ENCODE measurements at regions of chr22 and their contacts with region 1.

Region 1: DNA sequence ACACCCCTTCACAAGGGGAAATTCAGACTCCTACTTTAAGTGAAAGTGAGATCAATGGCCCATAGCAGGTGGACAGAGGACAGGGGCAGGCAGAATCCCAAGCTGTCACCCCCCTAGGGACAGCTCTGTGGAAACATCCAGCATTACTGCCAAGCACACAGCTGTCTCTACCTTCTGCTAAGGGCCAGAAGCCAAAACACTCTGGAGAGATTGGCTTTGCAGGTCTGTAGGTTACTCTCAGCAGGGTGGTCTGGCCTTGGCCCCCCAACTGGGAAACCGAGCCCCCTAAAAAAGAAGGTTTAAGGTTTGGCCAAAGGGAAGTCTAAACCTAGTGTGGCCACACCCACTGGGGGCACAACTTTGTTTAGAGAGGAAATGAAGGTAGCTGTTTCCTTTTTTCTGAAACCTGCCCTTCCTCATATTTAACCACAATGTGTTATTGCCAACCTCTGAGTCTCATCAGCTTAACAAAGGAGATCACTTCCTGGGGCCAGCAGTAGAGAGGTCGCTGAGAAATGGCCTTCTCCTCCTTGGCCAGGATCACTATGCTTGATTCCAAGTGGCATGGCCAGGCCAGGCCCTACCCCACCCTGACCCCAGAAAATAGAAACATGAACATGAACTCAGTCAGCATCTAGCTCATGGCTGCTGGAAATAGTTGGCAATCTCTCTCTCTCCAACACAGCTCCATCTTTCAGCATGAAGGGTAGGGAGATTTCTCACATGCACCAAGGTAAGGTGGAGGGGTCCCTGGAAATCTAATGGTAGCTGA is 25.9 kb upstream of the SCARF2 start:
- DNase-seq: peak in 8 of 9 experiments; percentile 33 to 78 (median 60)
- ATAC-seq: peak; percentile 61
- H3K4me3 ChIP-seq: peak overlapping the region in 1 of 2 experiments; percentile 10
- H3K4me3 Mint-ChIP-seq: peak overlapping the region; percentile 74
- H3K27ac ChIP-seq: peak overlapping the region; percentile 84 to 90
- H3K27ac Mint-ChIP-seq: peak overlapping the region; percentile 98
- H3K4me1 ChIP-seq: peaks cover 57% of the 10 kb centered on the region
- H3K4me1 Mint-ChIP-seq: peaks cover 61% of the 10 kb centered on the region
- H3K27me3 ChIP-seq: no peaks in the 10 kb centered on the region
- H3K27me3 Mint-ChIP-seq: no peaks in the 10 kb centered on the region
- CTCF ChIP-seq: no peak

Region 2: GRCh38 chr22:19962233-19962908 is 501.1 kb before region 1 on chr22:
- CTCF ChIA-PET with region 1: no interaction called
- POLR2A ChIA-PET with region 1: no interaction called
- intact Hi-C with region 1: no loop called
- DNase-seq: peak in 5 of 9 experiments; percentile 59 to 76 (median 63)
- ATAC-seq: peak; percentile 97
- H3K4me3 ChIP-seq: no peak overlapping the region
- H3K4me3 Mint-ChIP-seq: no peak overlapping the region
- H3K27ac ChIP-seq: no peak overlapping the region
- H3K27ac Mint-ChIP-seq: no peak overlapping the region
- H3K4me1 ChIP-seq: no peaks in the 10 kb centered on the region
- H3K4me1 Mint-ChIP-seq: no peaks in the 10 kb centered on the region
- H3K27me3 ChIP-seq: no peaks in the 10 kb centered on the region
- H3K27me3 Mint-ChIP-seq: no peaks in the 10 kb centered on the region
- CTCF ChIP-seq: peak; percentile 32

Region 3: GRCh38 chr22:20319745-20320658 is 143.5 kb before region 1 on chr22 and contains the start of gene DGCR6L:
- CTCF ChIA-PET with region 1: no interaction called
- POLR2A ChIA-PET with region 1: interaction called, 3 read pairs
- intact Hi-C with region 1: loop called in 1 of 2 experiments (anchors 5 kb)
- DNase-seq: peak; percentile 91 to 99 (median 97)
- ATAC-seq: peak; percentile 76
- H3K4me3 ChIP-seq: peak within 1 kb of the TSS; percentile 88 to 97
- H3K4me3 Mint-ChIP-seq: peak within 1 kb of the TSS; percentile 90
- H3K27ac ChIP-seq: peak within 1 kb of the TSS; percentile 69 to 70
- H3K27ac Mint-ChIP-seq: peak within 1 kb of the TSS; percentile 89
- H3K4me1 ChIP-seq: peaks cover 51% of the 10 kb centered on the region
- H3K4me1 Mint-ChIP-seq: peaks cover 62% of the 10 kb centered on the region
- H3K27me3 ChIP-seq: no peaks in the 10 kb centered on the region
- H3K27me3 Mint-ChIP-seq: no peaks in the 10 kb centered on the region
- CTCF ChIP-seq: no peak
- total RNA-seq, gene DGCR6L: 29.8 to 32.9 TPM

Region 4: GRCh38 chr22:20405931-20406685 is 57.4 kb before region 1 on chr22:
- CTCF ChIA-PET with region 1: no interaction called
- POLR2A ChIA-PET with region 1: no interaction called
- intact Hi-C with region 1: no loop called
- DNase-seq: no peak
- ATAC-seq: no peak
- H3K4me3 ChIP-seq: no peak overlapping the region
- H3K4me3 Mint-ChIP-seq: no peak overlapping the region
- H3K27ac ChIP-seq: no peak overlapping the region
- H3K27ac Mint-ChIP-seq: no peak overlapping the region
- H3K4me1 ChIP-seq: peaks cover 7% of the 10 kb centered on the region
- H3K4me1 Mint-ChIP-seq: peaks cover 12% of the 10 kb centered on the region
- H3K27me3 ChIP-seq: no peaks in the 10 kb centered on the region
- H3K27me3 Mint-ChIP-seq: no peaks in the 10 kb centered on the region
- CTCF ChIP-seq: no peak

Region 5: GRCh38 chr22:20430720-20431510 is 32.6 kb before region 1 on chr22:
- CTCF ChIA-PET with region 1: interaction called, 4 read pairs
- POLR2A ChIA-PET with region 1: interaction called, 20 read pairs
- intact Hi-C with region 1: no loop called
- DNase-seq: peak; percentile 33 to 81 (median 62)
- ATAC-seq: peak; percentile 58
- H3K4me3 ChIP-seq: peak overlapping the region; percentile 60 to 67
- H3K4me3 Mint-ChIP-seq: peak overlapping the region; percentile 83
- H3K27ac ChIP-seq: no peak overlapping the region
- H3K27ac Mint-ChIP-seq: no peak overlapping the region
- H3K4me1 ChIP-seq: peaks cover 35% of the 10 kb centered on the region
- H3K4me1 Mint-ChIP-seq: peaks cover 35% of the 10 kb centered on the region
- H3K27me3 ChIP-seq: peaks cover 24 to 29% of the 10 kb centered on the region in 2 experiments
- H3K27me3 Mint-ChIP-seq: peaks cover 42% of the 10 kb centered on the region
- CTCF ChIP-seq: peak; percentile 18

Region 6: DNA sequence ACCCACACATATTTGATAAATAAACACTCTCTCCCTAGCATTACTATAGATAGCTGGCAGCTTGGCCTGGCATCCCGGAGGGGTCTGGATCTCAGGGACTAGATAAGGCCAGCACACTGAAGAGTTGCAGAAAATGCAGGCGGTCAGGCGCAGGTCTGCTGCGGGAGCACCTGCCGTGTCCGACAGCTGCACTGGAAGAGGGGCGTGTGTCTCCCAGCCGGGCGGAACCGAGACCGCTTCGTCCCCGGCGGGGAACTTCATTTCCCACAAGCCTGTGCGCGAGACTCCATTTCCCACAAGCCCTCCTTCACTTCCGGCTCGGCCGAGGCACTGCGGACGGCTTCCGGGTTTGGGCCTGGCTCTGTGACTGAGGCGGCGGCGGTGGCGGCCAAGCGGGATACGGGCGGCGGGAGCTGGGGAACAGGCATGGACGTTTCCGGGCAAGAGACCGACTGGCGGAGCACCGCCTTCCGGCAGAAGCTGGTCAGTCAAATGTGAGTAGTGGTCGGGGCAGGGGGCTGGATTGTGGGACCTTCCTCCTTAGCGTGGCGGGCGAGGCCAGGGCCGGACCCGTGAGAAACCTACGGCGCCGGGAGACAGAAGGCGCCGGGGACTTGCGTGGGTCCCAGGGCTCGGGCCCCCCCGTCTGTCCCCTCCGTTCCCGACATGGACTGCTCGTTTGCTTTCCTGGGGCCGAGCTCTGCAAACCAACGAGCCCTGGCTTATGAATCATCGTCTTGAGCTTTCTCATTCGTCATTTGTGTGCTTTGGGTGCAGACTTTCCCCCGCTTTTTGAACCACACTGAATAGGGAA is 44.0 kb after region 1 on chr22 and contains the start of gene MED15:
- CTCF ChIA-PET with region 1: no interaction called
- POLR2A ChIA-PET with region 1: interaction called, 14 read pairs
- intact Hi-C with region 1: loop called in 1 of 2 experiments (anchors 1 kb)
- DNase-seq: peak; percentile 71 to 93 (median 88)
- ATAC-seq: peak; percentile 81
- H3K4me3 ChIP-seq: peak within 1 kb of the TSS; percentile 92 to 100
- H3K4me3 Mint-ChIP-seq: peak within 1 kb of the TSS; percentile 95
- H3K27ac ChIP-seq: peak within 1 kb of the TSS; percentile 86 to 95
- H3K27ac Mint-ChIP-seq: peak within 1 kb of the TSS; percentile 96
- H3K4me1 ChIP-seq: peaks cover 34% of the 10 kb centered on the region
- H3K4me1 Mint-ChIP-seq: peaks cover 49% of the 10 kb centered on the region
- H3K27me3 ChIP-seq: no peaks in the 10 kb centered on the region
- H3K27me3 Mint-ChIP-seq: no peaks in the 10 kb centered on the region
- CTCF ChIP-seq: no peak
- total RNA-seq, gene MED15: 316 TPM

Region 7: DNA sequence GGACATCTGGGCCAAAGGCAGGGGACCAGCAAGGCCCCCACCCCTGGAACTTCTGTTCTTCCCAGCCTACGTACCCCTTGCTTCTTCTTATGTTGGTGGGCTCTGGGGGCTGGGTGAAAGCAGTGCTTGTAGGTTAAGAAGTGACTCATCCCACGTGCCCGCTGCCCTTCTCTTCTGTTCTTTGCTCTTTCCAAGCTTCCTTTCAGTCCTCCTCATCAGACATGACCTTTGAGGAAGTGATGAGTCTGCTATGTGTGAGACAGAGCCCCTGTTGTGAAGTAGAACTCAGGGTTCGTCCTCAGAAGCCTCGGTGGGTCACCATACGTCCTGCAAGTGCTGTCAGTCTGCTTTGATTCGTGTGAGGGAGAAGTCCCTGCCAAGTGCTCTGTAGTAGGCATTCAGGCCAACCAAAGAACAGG is 56.6 kb after region 1 on chr22:
- CTCF ChIA-PET with region 1: no interaction called
- POLR2A ChIA-PET with region 1: no interaction called
- intact Hi-C with region 1: no loop called
- DNase-seq: peak in 5 of 9 experiments; percentile 30 to 52 (median 40)
- ATAC-seq: peak; percentile 69
- H3K4me3 ChIP-seq: no peak overlapping the region
- H3K4me3 Mint-ChIP-seq: no peak overlapping the region
- H3K27ac ChIP-seq: peak overlapping the region in 1 of 2 experiments; percentile 46
- H3K27ac Mint-ChIP-seq: peak overlapping the region; percentile 78
- H3K4me1 ChIP-seq: peaks cover 62% of the 10 kb centered on the region
- H3K4me1 Mint-ChIP-seq: peaks cover 79% of the 10 kb centered on the region
- H3K27me3 ChIP-seq: no peaks in the 10 kb centered on the region
- H3K27me3 Mint-ChIP-seq: no peaks in the 10 kb centered on the region
- CTCF ChIP-seq: no peak

Region 8: DNA sequence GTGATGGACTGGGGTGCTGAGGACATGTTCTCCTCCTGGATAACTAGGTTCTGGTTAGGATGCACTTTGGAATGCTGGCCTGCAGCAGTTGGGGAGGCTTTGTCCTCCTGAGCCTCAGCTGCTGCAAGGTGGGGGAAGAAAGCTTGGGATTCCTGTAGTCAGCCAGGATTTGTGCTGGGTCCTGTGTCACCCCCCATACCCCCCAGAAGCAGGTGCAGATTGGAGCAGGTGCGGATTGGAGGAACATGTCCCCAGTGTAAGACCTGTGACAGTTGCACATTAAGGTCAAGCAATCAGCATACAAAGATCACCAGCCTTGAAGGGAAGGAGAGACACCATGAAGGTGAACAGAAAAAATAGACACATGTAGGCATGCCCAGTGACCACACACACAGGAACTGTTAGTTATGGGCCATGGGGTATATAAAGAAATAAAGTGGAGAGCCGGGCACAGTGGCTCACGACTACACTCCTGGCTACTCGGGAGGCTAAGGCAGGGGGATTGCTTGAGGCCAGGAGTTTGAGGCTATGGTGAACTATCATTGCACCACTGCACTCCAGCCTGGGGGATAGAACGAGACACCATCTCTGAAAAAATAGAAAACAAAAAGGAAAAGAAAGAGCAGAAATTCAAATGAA is 95.2 kb after region 1 on chr22:
- CTCF ChIA-PET with region 1: interaction called, 26 read pairs
- POLR2A ChIA-PET with region 1: interaction called, 30 read pairs
- intact Hi-C with region 1: no loop called
- DNase-seq: no peak
- ATAC-seq: no peak
- H3K4me3 ChIP-seq: no peak overlapping the region
- H3K4me3 Mint-ChIP-seq: peak overlapping the region; percentile 75
- H3K27ac ChIP-seq: peak overlapping the region in 1 of 2 experiments; percentile 87
- H3K27ac Mint-ChIP-seq: peak overlapping the region; percentile 97
- H3K4me1 ChIP-seq: peaks cover 65% of the 10 kb centered on the region
- H3K4me1 Mint-ChIP-seq: peaks cover 82% of the 10 kb centered on the region
- H3K27me3 ChIP-seq: no peaks in the 10 kb centered on the region
- H3K27me3 Mint-ChIP-seq: no peaks in the 10 kb centered on the region
- CTCF ChIP-seq: no peak

Region 9: GRCh38 chr22:20750461-20751184 is 287.1 kb after region 1 on chr22:
- CTCF ChIA-PET with region 1: no interaction called
- POLR2A ChIA-PET with region 1: no interaction called
- intact Hi-C with region 1: no loop called
- DNase-seq: peak in 4 of 9 experiments; percentile 17 to 51 (median 37)
- ATAC-seq: no peak
- H3K4me3 ChIP-seq: no peak overlapping the region
- H3K4me3 Mint-ChIP-seq: no peak overlapping the region
- H3K27ac ChIP-seq: no peak overlapping the region
- H3K27ac Mint-ChIP-seq: no peak overlapping the region
- H3K4me1 ChIP-seq: no peaks in the 10 kb centered on the region
- H3K4me1 Mint-ChIP-seq: no peaks in the 10 kb centered on the region
- H3K27me3 ChIP-seq: no peaks in the 10 kb centered on the region
- H3K27me3 Mint-ChIP-seq: no peaks in the 10 kb centered on the region
- CTCF ChIP-seq: no peak

Measured in CD8-positive, alpha-beta T cell (primary cell).